ENCODE measurements at regions of chr14 and their contacts with region 1.

Region 1: GRCh38 chr14:23910101-23910875 is 43.3 kb upstream of the DHRS4 start:
- DNase-seq: peak; percentile 35
- ATAC-seq: no peak
- H3K4me3 Mint-ChIP-seq: no peak overlapping the region
- H3K27ac Mint-ChIP-seq: no peak overlapping the region
- H3K4me1 Mint-ChIP-seq: no peaks in the 10 kb centered on the region
- H3K27me3 Mint-ChIP-seq: peaks cover 10% of the 10 kb centered on the region
- CTCF ChIP-seq: peak; percentile 78

Region 2: DNA sequence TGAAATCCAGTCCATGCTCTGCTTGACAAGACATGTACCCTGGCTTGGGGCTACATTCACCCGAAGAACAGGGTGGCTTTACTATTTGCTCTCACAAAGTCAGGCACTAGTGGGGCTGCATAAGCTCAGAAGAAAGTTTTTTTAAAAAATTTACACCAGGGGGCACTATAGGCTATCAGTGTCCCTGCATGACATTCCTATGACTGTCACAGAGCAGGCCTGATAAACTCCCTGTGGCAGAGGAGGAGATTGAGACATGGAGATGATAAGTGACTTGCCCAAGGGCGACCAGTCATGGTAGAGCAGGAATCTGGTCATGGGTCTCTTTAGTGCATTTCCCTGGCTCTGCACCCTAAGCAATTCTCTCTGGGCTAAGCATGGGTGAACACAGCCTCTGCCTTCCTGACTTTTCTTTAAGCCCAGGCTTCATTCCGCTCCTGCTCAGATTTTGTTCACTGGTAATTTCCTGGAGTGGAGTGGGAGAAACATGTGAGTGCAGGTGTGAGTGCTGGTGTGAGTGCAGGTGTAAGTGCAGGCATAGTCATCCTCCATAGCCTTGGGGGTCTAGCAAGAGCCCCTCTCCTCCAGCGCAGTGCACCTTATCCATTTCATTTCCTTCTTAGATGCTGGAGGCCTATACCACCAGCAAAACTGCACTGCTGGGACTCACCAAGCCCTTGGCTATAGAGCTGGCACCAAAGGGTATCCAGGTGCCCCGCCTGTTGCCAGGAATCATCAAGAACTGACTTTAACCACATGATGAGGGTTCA is 182.5 kb before region 1 on chr14:
- CTCF ChIA-PET with region 1: interaction called, 13 read pairs
- POLR2A ChIA-PET with region 1: no interaction called
- intact Hi-C with region 1: no loop called
- DNase-seq: no peak
- ATAC-seq: peak; percentile 60
- H3K4me3 Mint-ChIP-seq: no peak overlapping the region
- H3K27ac Mint-ChIP-seq: no peak overlapping the region
- H3K4me1 Mint-ChIP-seq: no peaks in the 10 kb centered on the region
- H3K27me3 Mint-ChIP-seq: no peaks in the 10 kb centered on the region
- CTCF ChIP-seq: peak; percentile 50

Region 3: GRCh38 chr14:23922545-23922944 is 12.3 kb after region 1 on chr14:
- CTCF ChIA-PET with region 1: interaction called, 19 read pairs
- POLR2A ChIA-PET with region 1: no interaction called
- intact Hi-C with region 1: no loop called
- DNase-seq: no peak
- ATAC-seq: no peak
- H3K4me3 Mint-ChIP-seq: no peak overlapping the region
- H3K27ac Mint-ChIP-seq: no peak overlapping the region
- H3K4me1 Mint-ChIP-seq: no peaks in the 10 kb centered on the region
- H3K27me3 Mint-ChIP-seq: no peaks in the 10 kb centered on the region
- CTCF ChIP-seq: no peak